Transverse colon (tissue), 4 donors: ENCODE measurements at regions of chr11 and their contacts with region 1.

Region 1: DNA sequence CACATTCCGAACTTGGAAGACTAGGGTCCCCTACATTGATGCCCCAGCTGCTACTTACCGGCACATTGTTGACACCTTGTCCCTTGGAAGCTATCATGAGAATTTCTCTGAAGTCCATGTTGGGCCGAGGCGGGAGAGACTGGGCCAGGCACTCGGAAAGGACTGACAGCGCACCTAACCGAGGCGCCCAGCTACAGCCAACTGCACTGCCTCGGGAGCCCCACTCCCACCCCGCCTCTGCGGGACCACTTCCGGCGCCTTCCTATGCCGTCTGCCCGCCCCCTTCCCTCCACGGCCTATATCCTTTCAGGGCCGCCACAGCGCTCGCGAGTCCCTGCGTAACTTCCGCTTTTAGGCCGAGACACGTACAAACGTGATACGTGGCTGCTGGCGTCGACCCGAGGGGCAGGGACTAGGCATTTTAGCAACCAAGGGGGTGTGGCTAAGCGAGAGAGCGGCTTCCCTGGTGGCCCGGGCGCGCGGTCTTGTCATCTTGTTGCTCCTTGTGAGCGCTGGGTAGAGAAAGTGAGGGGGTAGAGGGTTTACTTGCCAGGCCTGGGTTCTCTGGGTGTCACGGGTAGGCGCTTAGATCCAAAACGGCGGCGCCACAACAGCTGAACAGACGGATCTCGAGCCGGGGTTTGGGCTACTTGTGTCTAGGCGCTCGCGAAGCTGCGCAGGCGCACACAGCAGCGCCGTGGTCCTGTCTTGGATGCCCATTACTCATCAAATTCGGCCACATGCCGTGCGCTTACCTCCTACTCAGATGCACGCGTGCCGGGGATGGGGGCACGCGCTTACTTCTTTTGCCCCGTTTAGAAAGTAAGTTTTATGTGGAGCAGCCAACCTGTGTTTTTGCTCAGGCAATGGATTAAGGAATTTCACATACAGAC is at the start of gene SPTY2D1:
- DNase-seq: peak; percentile 99
- H3K4me3 ChIP-seq: peak within 1 kb of the TSS; percentile 78 to 99 (median 83)
- H3K27ac ChIP-seq: peak within 1 kb of the TSS; percentile 87 to 93 (median 92)
- H3K4me1 ChIP-seq: peaks cover 7 to 30% (median 15%) of the 10 kb centered on the region in 4 donors
- H3K27me3 ChIP-seq: no peaks in the 10 kb centered on the region
- CTCF ChIP-seq: no peak
- EP300 ChIP-seq: no peak
- POLR2A ChIP-seq: peak; percentile 96
- total RNA-seq, gene SPTY2D1: 8.2 to 18.4 (median 16.4) TPM

Region 2: GRCh38 chr11:17954395-17955252 is 679.8 kb before region 1 on chr11:
- in situ Hi-C with region 1: no loop called
- intact Hi-C with region 1: no loop called
- DNase-seq: no peak
- H3K4me3 ChIP-seq: no peak overlapping the region
- H3K27ac ChIP-seq: no peak overlapping the region
- H3K4me1 ChIP-seq: no peaks in the 10 kb centered on the region
- H3K27me3 ChIP-seq: no peaks in the 10 kb centered on the region
- CTCF ChIP-seq: no peak
- EP300 ChIP-seq: no peak
- POLR2A ChIP-seq: no peak

Region 3: GRCh38 chr11:18321980-18322711 is 312.2 kb before region 1 on chr11 and contains the starts of genes GTF2H1 and HPS5:
- in situ Hi-C with region 1: loop called in 1 of 4 experiments (anchors 10 kb)
- intact Hi-C with region 1: no loop called
- DNase-seq: peak; percentile 98
- H3K4me3 ChIP-seq: peak within 1 kb of the TSS; percentile 71 to 98 (median 84)
- H3K27ac ChIP-seq: peak within 1 kb of the TSS; percentile 91 to 97 (median 94)
- H3K4me1 ChIP-seq: peaks cover 19 to 51% (median 27%) of the 10 kb centered on the region in 4 donors
- H3K27me3 ChIP-seq: no peaks in the 10 kb centered on the region
- CTCF ChIP-seq: peak in 1 of 5 experiments; percentile 2
- EP300 ChIP-seq: peak; percentile 90
- POLR2A ChIP-seq: peak; percentile 97
- total RNA-seq, gene GTF2H1: 46.6 to 147 (median 60.0) TPM
- total RNA-seq, gene HPS5: 3.0 to 18.9 (median 14.2) TPM

Region 4: GRCh38 chr11:18588297-18589252 is 45.8 kb before region 1 on chr11 and contains the start of gene UEVLD:
- in situ Hi-C with region 1: no loop called
- intact Hi-C with region 1: loop called (anchors 2 kb)
- DNase-seq: peak; percentile 91
- H3K4me3 ChIP-seq: peak within 1 kb of the TSS; percentile 54 to 97 (median 72)
- H3K27ac ChIP-seq: peak within 1 kb of the TSS; percentile 79 to 94 (median 84)
- H3K4me1 ChIP-seq: peaks cover 16 to 38% (median 25%) of the 10 kb centered on the region in 4 donors
- H3K27me3 ChIP-seq: no peaks in the 10 kb centered on the region
- CTCF ChIP-seq: no peak
- EP300 ChIP-seq: no peak
- POLR2A ChIP-seq: peak; percentile 84
- total RNA-seq, gene UEVLD: 11.2 to 40.3 (median 25.3) TPM

Region 5: GRCh38 chr11:18699848-18700261 is 65.5 kb after region 1 on chr11:
- in situ Hi-C with region 1: loop called in 2 of 4 experiments (anchors 5 to 10 kb)
- intact Hi-C with region 1: no loop called
- DNase-seq: no peak
- H3K4me3 ChIP-seq: peak overlapping the region in 1 of 4 donors; percentile 62
- H3K27ac ChIP-seq: peak overlapping the region in 3 of 4 donors; percentile 74 to 81 (median 79)
- H3K4me1 ChIP-seq: peaks cover under 1 to 17% (median 5%) of the 10 kb centered on the region in 4 donors
- H3K27me3 ChIP-seq: no peaks in the 10 kb centered on the region
- CTCF ChIP-seq: no peak
- EP300 ChIP-seq: no peak
- POLR2A ChIP-seq: no peak

Region 6: DNA sequence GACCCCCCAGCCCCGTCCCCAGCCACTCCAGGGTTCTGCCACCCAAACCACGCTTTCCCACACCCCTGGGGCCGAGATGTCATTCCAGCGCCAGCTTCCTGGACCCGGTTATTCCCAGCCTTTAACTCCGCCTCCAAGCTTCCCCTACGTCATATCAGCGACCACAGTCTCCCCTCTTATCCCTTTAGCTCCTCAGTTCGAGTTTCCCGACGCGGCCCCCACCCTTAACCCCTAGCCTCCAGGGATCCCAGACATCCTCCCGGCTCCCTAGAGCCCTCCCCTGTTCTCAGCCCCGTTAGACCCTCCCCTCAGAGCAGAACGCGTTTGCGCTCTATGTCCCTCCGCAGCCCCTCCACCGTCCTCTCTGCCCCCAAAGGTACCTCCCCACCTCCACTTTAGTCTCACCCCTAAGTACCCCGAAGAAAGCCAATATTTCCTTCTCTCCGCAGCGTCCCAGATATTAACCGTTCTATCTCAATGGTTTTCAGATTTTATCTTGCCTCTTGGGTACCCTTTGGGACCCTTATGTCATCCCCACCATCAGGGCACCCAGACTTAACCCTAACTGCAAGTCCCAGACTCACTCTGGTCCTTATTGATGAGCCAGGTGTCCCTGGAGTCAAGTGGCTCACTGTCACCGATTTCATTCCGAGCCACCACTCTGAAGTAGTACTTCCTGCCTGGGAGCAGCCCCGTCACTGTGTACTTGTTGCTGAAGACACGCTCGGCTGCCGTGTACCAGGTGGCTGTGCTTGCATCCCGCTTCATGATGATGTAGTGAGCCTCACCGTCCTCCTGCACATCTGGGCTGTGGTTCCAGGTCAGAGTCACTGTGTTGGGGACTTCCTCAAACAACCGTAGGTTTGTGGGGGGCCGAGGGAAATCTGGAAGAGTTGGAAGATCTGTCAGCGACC is 72.2 kb after region 1 on chr11:
- in situ Hi-C with region 1: loop called in 2 of 4 experiments (anchors 5 to 10 kb)
- intact Hi-C with region 1: no loop called
- DNase-seq: peak; percentile 71
- H3K4me3 ChIP-seq: peak overlapping the region; percentile 36 to 59 (median 46)
- H3K27ac ChIP-seq: peak overlapping the region; percentile 59 to 78 (median 70)
- H3K4me1 ChIP-seq: peaks cover 9 to 19% (median 12%) of the 10 kb centered on the region in 4 donors
- H3K27me3 ChIP-seq: no peaks in the 10 kb centered on the region
- CTCF ChIP-seq: no peak
- EP300 ChIP-seq: no peak
- POLR2A ChIP-seq: peak; percentile 35